ENCODE measurements at regions of chr1 and their contacts with region 1.

Region 1: GRCh38 chr1:36306902-36307456 is 811 bp downstream of the SH3D21 start:
- DNase-seq: peak; percentile 93
- H3K4me3 Mint-ChIP-seq: peak overlapping the region; percentile 99
- H3K27ac Mint-ChIP-seq: peak overlapping the region; percentile 95
- H3K4me1 Mint-ChIP-seq: peaks cover 37% of the 10 kb centered on the region
- H3K27me3 Mint-ChIP-seq: no peaks in the 10 kb centered on the region

Region 2: GRCh38 chr1:36323597-36324352 is 16.8 kb after region 1 on chr1 and contains the start of gene EVA1B:
- intact Hi-C with region 1: loop called (anchors 1 kb)
- DNase-seq: peak; percentile 57
- H3K4me3 Mint-ChIP-seq: peak within 1 kb of the TSS; percentile 75
- H3K27ac Mint-ChIP-seq: peak within 1 kb of the TSS; percentile 55
- H3K4me1 Mint-ChIP-seq: peaks cover 22% of the 10 kb centered on the region
- H3K27me3 Mint-ChIP-seq: no peaks in the 10 kb centered on the region
- total RNA-seq, gene EVA1B: 10.7 and 11.0 TPM in 2 replicates

Region 3: GRCh38 chr1:36385410-36386257 is 78.7 kb after region 1 on chr1 and contains the start of gene STK40:
- intact Hi-C with region 1: loop called (anchors 5 kb)
- DNase-seq: peak; percentile 97
- H3K4me3 Mint-ChIP-seq: peak within 1 kb of the TSS; percentile 91
- H3K27ac Mint-ChIP-seq: peak within 1 kb of the TSS; percentile 94
- H3K4me1 Mint-ChIP-seq: peaks cover 37% of the 10 kb centered on the region
- H3K27me3 Mint-ChIP-seq: no peaks in the 10 kb centered on the region
- total RNA-seq, gene STK40: 41.3 and 42.4 TPM in 2 replicates

Region 4: DNA sequence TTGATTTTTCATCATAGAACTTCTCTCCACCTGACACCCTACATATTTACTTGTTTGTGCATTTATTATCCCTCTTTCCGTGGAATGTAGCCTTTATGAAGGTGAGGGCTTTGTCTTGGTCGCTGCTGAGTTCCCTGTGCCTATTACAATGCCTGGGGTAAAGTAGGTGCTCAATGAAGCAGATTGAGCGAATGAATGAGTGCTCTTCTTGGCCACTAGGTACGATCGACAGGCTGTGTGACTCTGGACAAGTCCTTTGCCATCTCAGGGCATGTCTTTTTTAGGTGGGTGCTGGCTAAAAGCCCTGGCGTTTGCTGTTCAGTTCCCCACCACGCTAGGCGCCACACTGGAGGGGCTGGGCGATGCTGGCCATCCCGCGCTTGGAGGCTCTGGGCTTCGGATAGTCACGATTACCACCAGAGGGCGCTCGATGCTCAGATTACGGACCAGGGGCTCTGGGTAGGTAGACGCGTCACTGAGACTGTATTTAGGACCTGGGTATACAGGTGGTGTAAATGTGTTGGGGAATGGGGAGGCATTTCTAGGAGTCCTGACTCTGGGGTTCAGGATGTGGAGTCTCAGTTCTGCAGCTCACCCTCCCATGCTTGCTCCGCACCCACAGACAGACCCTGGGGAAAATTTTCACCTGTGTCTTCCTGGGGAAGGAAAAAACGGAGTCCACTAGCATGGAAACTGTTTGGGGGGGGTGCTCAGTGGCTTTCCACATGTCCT is 246.8 kb after region 1 on chr1:
- intact Hi-C with region 1: no loop called
- DNase-seq: peak; percentile 52
- H3K4me3 Mint-ChIP-seq: no peak overlapping the region
- H3K27ac Mint-ChIP-seq: no peak overlapping the region
- H3K4me1 Mint-ChIP-seq: no peaks in the 10 kb centered on the region
- H3K27me3 Mint-ChIP-seq: peaks cover 27% of the 10 kb centered on the region